ENCODE measurements at regions of chr9 and their contacts with region 1.

Region 1: DNA sequence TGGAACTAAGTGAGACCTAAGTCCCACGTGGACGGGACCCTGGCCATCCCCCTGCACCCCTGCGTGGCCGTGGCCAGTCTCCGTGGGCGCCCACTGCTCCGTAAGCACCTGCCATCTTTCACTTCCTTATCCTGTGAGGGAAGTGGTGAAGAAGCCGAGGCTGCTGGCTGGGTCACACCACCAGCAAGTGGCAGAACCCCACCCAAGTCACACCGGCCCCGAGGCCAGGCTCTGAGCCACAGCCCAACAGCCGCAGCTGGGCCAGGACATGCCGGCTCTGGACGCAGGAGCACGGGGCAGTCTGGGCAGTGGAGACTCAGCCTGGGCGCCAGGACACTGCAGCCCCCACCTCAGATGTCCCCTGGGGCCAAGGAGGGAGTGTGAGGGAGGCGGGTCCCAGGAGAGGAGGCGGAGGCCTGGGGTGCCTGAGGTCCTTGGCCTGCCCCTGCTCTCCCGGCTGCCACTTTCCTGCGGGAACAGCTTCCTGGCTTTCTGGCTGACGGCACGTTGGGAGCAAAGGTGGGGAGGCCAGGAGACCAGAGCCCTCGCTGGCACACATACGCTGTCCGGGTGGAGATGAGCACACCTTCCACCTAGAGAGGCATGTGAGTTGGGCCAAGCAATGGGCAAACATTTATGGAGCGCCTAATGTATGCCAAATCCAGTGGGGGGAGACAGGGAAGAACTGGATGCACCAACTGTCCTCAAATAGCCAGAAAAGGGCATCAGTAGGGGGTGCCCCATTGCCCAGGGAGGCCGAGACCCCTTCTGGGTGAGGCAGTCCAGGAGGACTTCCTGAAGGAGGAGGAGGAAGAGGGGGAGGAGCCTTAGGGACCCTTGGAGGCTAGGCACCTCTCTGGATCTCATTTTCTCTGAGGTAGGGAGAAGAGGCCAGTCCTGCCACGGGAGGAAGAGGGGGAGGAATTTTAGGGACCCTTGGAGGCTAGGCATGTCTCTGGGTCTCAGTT is 43.9 kb upstream of the EGFL7 start:
- DNase-seq: peak; percentile 90
- ATAC-seq: peak; percentile 92
- H3K4me3 ChIP-seq: peak overlapping the region in 1 of 5 experiments; percentile 7
- H3K4me3 Mint-ChIP-seq: peak overlapping the region; percentile 71
- H3K27ac ChIP-seq: peak overlapping the region; percentile 68 to 79
- H3K27ac Mint-ChIP-seq: peak overlapping the region; percentile 93
- H3K4me1 ChIP-seq: peaks cover 49 to 64% of the 10 kb centered on the region in 2 donors
- H3K4me1 Mint-ChIP-seq: peaks cover 44% of the 10 kb centered on the region
- H3K27me3 ChIP-seq: peaks cover 0 to 10% (median 0%) of the 10 kb centered on the region in 4 experiments
- H3K27me3 Mint-ChIP-seq: no peaks in the 10 kb centered on the region
- CTCF ChIP-seq: no peak

Region 2: DNA sequence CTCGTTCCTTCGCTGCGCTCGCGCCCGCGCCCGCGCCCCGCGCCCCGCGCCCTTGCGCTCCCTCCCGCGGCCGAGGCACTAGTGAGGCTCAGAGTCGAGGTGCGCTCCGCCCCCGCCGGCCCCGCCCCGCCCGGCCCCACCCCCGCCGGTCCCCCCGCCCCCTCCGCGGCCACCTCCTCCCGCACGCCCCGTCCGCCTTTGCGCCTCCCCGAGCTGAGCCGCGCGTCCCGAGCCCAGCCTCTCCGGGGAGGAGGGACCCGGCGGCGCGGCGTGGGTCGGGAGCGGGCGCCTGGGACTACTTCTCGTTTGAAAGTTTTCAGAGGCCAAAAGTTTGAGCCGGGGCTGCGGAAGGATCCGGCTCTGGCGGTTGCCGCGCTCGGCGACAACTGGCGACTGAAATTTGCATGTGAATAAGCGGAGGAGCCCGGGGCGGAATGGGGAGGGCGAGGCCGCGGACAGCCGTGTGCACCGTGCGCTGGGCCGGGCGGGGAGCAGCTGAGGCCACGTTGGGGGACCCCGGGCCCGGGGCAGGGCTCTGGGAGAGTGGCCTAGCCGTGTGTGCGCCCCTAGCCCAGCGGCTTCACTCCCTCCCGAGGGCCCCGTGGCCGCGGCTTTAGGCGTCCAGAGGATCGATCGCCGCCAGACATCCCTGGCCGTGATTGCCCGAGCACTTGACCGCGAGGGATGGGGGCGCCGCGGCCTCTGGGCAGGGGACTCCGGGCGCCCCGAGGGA is 72.7 kb before region 1 on chr9 and contains the start of gene NOTCH1:
- CTCF ChIA-PET with region 1: no interaction called
- POLR2A ChIA-PET with region 1: no interaction called
- intact Hi-C with region 1: loop called (anchors 1 kb)
- DNase-seq: peak; percentile 93
- ATAC-seq: peak; percentile 72
- H3K4me3 ChIP-seq: peak within 1 kb of the TSS; percentile 51 to 88 (median 70)
- H3K4me3 Mint-ChIP-seq: peak within 1 kb of the TSS; percentile 92
- H3K27ac ChIP-seq: peak within 1 kb of the TSS; percentile 33 to 75
- H3K27ac Mint-ChIP-seq: peak within 1 kb of the TSS; percentile 94
- H3K4me1 ChIP-seq: peaks cover 30 to 44% of the 10 kb centered on the region in 2 donors
- H3K4me1 Mint-ChIP-seq: peaks cover 34% of the 10 kb centered on the region
- H3K27me3 ChIP-seq: no peaks in the 10 kb centered on the region
- H3K27me3 Mint-ChIP-seq: no peaks in the 10 kb centered on the region
- CTCF ChIP-seq: no peak
- total RNA-seq, gene NOTCH1: 38.5 and 40.6 TPM in 2 replicates

Region 3: DNA sequence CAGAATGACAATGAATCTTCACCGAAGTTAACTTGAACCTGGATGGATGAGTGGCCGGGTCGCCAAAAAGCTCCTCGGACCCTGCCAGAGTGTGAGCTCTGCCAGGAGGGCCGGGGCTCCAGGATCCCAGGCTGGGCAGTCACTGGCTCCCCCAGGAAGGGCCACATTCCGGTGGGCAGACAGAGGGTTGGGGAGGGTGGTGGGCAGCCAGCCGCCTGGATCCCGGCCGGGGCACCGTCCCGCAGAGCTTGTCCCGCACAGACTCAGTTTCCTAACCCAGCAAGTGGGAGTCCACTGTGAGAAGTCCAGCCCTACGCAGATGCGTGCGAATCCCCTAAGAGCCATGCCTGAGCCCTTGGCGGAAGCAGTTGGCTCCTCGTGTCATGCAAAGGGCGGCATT is 62.7 kb before region 1 on chr9:
- CTCF ChIA-PET with region 1: no interaction called
- POLR2A ChIA-PET with region 1: interaction called, 12 read pairs
- intact Hi-C with region 1: no loop called
- DNase-seq: no peak
- ATAC-seq: no peak
- H3K4me3 ChIP-seq: no peak overlapping the region
- H3K4me3 Mint-ChIP-seq: no peak overlapping the region
- H3K27ac ChIP-seq: no peak overlapping the region
- H3K27ac Mint-ChIP-seq: peak overlapping the region; percentile 20
- H3K4me1 ChIP-seq: peaks cover 23 to 29% of the 10 kb centered on the region in 2 donors
- H3K4me1 Mint-ChIP-seq: peaks cover 26% of the 10 kb centered on the region
- H3K27me3 ChIP-seq: no peaks in the 10 kb centered on the region
- H3K27me3 Mint-ChIP-seq: no peaks in the 10 kb centered on the region
- CTCF ChIP-seq: no peak

Region 4: DNA sequence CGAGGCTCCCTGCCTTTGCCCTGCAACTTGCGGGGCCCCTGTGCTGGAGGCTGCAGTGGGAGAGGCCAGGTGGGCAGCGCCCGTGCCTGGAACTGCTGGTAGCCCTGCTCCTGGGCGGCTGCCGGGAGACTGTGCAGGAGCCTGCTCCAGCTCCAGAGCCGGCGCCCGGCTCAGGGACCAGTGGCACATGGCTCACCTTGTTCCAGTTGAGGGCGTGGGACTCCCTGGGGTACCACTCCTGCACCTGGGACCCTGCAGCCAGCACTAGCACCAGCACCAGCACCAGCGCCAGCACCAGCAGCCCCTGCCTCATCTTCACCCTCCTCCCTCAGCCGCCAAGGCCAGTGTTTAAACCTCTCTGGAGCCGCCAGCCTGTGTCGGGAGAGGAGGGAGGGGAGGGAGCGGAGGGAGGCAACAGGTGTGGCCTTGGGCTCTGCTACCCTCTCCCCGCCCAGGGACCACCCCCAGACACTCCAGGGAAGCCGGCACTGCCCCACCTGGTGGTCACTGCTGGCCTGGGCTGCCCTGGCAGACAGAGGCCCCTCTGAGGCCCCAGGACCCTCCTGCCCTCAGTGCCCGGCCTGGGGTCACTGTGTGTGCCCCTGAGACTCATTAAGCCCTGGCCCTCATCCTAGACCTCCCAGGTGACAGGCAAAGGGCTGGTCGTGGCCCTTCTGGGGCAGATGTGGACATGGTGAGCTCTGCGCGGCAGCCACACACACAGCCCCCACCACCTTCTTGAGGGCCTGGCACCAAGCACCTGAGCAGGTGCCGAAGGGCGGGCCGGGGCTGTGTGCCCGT is 123.9 kb after region 1 on chr9 and contains the start of gene LCN10:
- CTCF ChIA-PET with region 1: no interaction called
- POLR2A ChIA-PET with region 1: no interaction called
- intact Hi-C with region 1: no loop called
- DNase-seq: no peak
- ATAC-seq: peak; percentile 5
- H3K4me3 ChIP-seq: peak within 1 kb of the TSS; percentile 31 to 97 (median 77)
- H3K4me3 Mint-ChIP-seq: peak within 1 kb of the TSS; percentile 91
- H3K27ac ChIP-seq: peak within 1 kb of the TSS; percentile 82 to 83
- H3K27ac Mint-ChIP-seq: peak within 1 kb of the TSS; percentile 94
- H3K4me1 ChIP-seq: peaks cover 26 to 55% of the 10 kb centered on the region in 2 donors
- H3K4me1 Mint-ChIP-seq: peaks cover 47% of the 10 kb centered on the region
- H3K27me3 ChIP-seq: no peaks in the 10 kb centered on the region
- H3K27me3 Mint-ChIP-seq: no peaks in the 10 kb centered on the region
- CTCF ChIP-seq: no peak
- total RNA-seq, gene LCN10: 70.7 and 76.3 TPM in 2 replicates

Measured in B cell (primary cell).